ENCODE measurements at regions of chr12 and their contacts with region 1.

Region 1: DNA sequence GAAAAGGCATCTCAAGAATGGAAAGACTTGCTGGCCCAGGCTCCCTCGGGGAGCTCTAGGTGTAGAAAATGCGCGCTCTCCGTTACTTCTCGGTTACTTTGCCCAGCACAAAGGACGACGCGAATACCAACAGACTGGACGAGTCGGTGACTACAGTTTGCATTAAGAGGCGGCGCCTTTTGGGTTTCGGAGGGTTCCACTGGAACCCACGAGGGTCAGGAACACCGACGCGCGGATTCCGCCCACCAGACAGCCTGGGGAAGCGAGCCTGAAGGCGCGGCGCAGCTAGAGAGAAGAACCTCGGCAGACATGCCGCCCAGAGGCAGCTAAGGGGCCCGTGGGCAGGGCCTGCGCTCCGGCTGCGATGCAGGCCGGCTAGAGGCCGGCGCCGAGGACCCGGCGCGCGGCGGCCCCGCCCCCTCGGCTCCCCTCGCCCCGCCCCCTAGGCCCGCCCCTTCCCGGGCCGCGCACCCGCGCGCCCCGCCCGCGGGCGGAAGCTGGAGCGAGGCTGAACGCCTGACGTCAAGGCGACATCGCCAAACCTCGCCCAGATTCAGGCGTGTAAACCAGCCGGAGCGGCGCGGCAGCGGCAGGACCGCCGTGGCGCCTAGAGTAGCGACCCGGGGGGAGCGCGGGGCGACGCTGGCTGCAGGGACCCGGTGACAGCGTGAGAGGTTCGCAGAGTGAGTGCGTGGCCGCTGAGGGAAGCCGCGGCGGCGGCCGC is at the start of gene RAP1B:
- DNase-seq: peak; percentile 88 to 90
- ATAC-seq: peak; percentile 84
- total RNA-seq, gene RAP1B: 121 to 182 TPM

Region 2: GRCh38 chr12:68267892-68268396 is 342.6 kb before region 1 on chr12:
- intact Hi-C with region 1: no loop called
- DNase-seq: no peak
- ATAC-seq: no peak

Region 3: GRCh38 chr12:68393417-68393816 is 217.1 kb before region 1 on chr12:
- intact Hi-C with region 1: no loop called
- DNase-seq: no peak
- ATAC-seq: no peak

Region 4: GRCh38 chr12:68435816-68436215 is 174.7 kb before region 1 on chr12:
- intact Hi-C with region 1: loop called in 1 of 2 experiments (anchors 10 kb)
- DNase-seq: no peak
- ATAC-seq: no peak

Region 5: DNA sequence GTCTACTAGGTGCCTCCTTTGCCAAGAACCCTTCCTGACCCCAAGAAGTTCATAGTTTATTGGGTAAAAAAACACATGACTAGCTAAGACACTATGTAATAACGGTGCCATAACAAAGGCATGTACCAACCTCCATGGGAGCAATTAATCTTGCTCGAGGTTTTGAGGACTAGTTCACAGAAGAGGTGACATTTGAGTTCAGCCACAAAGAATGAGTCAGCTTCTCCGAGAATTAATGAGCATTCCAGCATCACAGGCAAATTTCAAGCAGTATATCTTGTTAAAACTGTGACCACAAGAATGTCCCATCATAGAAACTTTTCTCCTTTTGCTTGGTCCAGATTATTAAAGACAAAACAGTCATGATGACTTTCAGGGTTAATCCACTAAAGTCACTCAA is 112.8 kb before region 1 on chr12:
- intact Hi-C with region 1: no loop called
- DNase-seq: no peak
- ATAC-seq: no peak